ENCODE measurements at regions of chr3 and their contacts with region 1.

Region 1: DNA sequence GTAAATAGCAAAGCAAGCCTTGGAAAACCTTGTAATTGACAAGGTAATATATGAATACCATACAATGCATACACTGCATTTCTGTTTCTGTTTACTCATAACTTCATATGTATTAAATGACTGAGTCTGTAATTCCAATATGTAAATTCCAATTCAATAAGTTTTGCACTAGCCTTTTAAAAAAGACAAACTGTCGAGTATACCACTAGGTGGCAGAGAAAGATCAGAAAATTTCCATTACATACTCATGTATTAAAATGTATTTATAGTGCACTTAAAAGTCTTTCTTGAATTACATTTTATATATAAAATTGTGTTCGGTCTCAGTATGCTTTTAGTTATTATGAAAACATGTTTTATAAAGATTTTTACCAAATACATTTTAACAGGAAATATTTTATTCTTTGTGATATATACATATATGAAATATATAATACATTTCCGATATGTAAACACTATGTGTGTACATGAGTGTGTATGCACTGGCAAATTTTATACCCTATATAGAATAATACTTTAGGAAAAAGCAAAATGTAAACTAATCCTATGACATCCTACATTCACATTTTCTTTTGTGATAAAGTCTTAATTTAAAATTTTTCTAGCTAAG is 216.8 kb downstream of the VGLL3 start:
- DNase-seq: peak; percentile 45
- H3K4me3 Mint-ChIP-seq: no peak overlapping the region
- H3K27ac Mint-ChIP-seq: no peak overlapping the region
- H3K4me1 Mint-ChIP-seq: no peaks in the 10 kb centered on the region
- H3K27me3 Mint-ChIP-seq: no peaks in the 10 kb centered on the region
- CTCF ChIP-seq: peak; percentile 35

Region 2: GRCh38 chr3:86828751-86829150 is 54.6 kb after region 1 on chr3:
- CTCF ChIA-PET with region 1: no interaction called
- POLR2A ChIA-PET with region 1: no interaction called
- intact Hi-C with region 1: no loop called
- DNase-seq: peak; percentile 17
- H3K4me3 Mint-ChIP-seq: no peak overlapping the region
- H3K27ac Mint-ChIP-seq: peak overlapping the region; percentile 7
- H3K4me1 Mint-ChIP-seq: peaks cover 15% of the 10 kb centered on the region
- H3K27me3 Mint-ChIP-seq: no peaks in the 10 kb centered on the region
- CTCF ChIP-seq: no peak

Region 3: DNA sequence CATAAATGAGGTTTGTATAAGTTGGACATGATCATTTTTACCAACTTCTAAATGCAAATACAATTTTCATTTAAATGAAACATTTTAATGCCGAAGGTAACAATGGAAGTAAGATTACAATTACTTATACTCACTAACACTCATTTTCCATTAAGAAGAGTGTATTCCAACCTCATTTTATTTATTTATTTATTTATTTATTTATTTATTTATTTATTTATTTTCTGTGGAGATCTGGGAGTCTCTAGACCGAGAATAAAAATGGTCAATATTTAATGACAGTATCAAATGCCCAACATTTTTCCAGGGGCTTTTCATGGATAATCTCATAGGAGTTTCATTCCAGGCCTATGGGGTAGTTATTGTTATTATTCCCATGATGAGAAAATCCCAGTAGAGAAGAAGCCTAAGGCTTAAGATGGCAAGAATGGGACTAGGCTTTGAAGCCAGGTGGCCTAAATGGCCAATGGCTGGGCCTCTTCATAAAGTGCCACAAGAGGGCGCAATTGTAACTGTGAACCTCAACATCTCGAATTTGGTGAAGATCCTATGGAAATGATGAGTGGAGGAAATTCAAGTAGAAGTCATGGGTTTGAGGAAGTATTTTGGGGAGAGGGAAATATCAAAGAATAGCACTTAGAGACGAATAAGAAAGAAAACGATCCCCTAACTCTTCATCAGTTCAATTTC is 195.5 kb after region 1 on chr3:
- CTCF ChIA-PET with region 1: interaction called, 10 read pairs
- POLR2A ChIA-PET with region 1: no interaction called
- intact Hi-C with region 1: no loop called
- DNase-seq: peak; percentile 79
- H3K4me3 Mint-ChIP-seq: no peak overlapping the region
- H3K27ac Mint-ChIP-seq: no peak overlapping the region
- H3K4me1 Mint-ChIP-seq: peaks cover 18% of the 10 kb centered on the region
- H3K27me3 Mint-ChIP-seq: no peaks in the 10 kb centered on the region
- CTCF ChIP-seq: peak; percentile 72

Region 4: GRCh38 chr3:87167628-87168456 is 393.7 kb after region 1 on chr3:
- CTCF ChIA-PET with region 1: interaction called, 10 read pairs
- POLR2A ChIA-PET with region 1: no interaction called
- intact Hi-C with region 1: loop called (anchors 1 kb)
- DNase-seq: peak; percentile 70
- H3K4me3 Mint-ChIP-seq: peak overlapping the region; percentile 75
- H3K27ac Mint-ChIP-seq: peak overlapping the region; percentile 3
- H3K4me1 Mint-ChIP-seq: no peaks in the 10 kb centered on the region
- H3K27me3 Mint-ChIP-seq: no peaks in the 10 kb centered on the region
- CTCF ChIP-seq: peak; percentile 48

Region 5: DNA sequence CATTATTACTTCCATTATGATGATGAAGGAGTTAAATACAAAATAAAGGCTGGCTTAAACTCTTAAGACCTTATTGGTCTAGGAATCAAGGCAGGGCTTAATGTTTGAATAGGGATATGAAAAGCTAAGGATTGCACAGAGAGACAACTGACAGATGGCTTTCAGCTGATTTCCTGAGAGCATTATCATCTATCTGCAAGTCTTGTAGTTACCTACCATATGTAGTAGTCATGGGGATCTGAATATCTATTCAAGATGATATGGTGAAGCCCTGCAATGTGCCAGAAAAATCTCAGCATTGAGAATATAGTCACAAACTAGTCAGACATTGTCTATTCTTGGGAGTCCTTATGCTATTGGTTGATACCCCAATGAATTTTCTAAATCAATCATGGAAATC is 405.5 kb after region 1 on chr3:
- CTCF ChIA-PET with region 1: interaction called, 12 read pairs
- POLR2A ChIA-PET with region 1: interaction called, 3 read pairs
- intact Hi-C with region 1: no loop called
- DNase-seq: no peak
- H3K4me3 Mint-ChIP-seq: no peak overlapping the region
- H3K27ac Mint-ChIP-seq: no peak overlapping the region
- H3K4me1 Mint-ChIP-seq: no peaks in the 10 kb centered on the region
- H3K27me3 Mint-ChIP-seq: no peaks in the 10 kb centered on the region
- CTCF ChIP-seq: no peak

Region 6: GRCh38 chr3:87260270-87260669 is 486.1 kb after region 1 on chr3:
- CTCF ChIA-PET with region 1: interaction called, 5 read pairs
- POLR2A ChIA-PET with region 1: no interaction called
- intact Hi-C with region 1: loop called (anchors 1 kb)
- DNase-seq: peak; percentile 69
- H3K4me3 Mint-ChIP-seq: no peak overlapping the region
- H3K27ac Mint-ChIP-seq: no peak overlapping the region
- H3K4me1 Mint-ChIP-seq: no peaks in the 10 kb centered on the region
- H3K27me3 Mint-ChIP-seq: no peaks in the 10 kb centered on the region
- CTCF ChIP-seq: peak; percentile 53

Region 7: GRCh38 chr3:87503900-87504508 is 729.8 kb after region 1 on chr3:
- CTCF ChIA-PET with region 1: no interaction called
- POLR2A ChIA-PET with region 1: no interaction called
- intact Hi-C with region 1: loop called (anchors 10 kb)
- DNase-seq: peak; percentile 81
- H3K4me3 Mint-ChIP-seq: no peak overlapping the region
- H3K27ac Mint-ChIP-seq: no peak overlapping the region
- H3K4me1 Mint-ChIP-seq: no peaks in the 10 kb centered on the region
- H3K27me3 Mint-ChIP-seq: no peaks in the 10 kb centered on the region
- CTCF ChIP-seq: peak; percentile 70

Region 8: DNA sequence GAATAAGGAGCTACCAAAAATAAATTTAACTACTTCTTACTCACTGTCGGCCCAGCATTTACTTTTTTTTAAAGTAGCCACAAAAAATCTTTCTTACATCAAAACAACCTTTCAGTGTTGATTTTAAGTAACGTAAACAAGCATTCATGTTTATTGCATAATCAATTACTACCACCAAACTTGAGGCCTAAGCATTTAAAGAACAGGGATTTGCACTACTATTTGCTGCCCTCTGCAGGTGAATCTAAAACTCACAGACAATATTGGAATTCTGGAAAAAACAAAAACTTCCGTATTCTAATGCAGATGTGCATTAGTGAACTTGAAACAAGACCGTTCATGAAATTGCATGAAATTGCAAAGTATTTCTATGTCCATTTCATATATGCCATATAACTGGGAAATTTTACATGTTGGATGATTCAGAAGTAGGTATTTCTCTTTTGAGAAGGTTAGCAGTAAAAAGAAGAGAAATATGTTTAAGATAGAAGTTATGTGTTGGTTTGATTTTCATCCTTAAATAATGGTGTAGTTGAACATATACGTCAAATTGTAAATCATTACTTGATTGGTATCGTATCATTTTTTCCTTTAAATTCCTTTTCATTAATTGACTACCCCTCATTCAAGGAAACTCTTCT is 1229.0 kb after region 1 on chr3:
- CTCF ChIA-PET with region 1: no interaction called
- POLR2A ChIA-PET with region 1: no interaction called
- intact Hi-C with region 1: loop called (anchors 2 kb)
- DNase-seq: peak; percentile 68
- H3K4me3 Mint-ChIP-seq: no peak overlapping the region
- H3K27ac Mint-ChIP-seq: no peak overlapping the region
- H3K4me1 Mint-ChIP-seq: no peaks in the 10 kb centered on the region
- H3K27me3 Mint-ChIP-seq: no peaks in the 10 kb centered on the region
- CTCF ChIP-seq: peak; percentile 69

Measured in MCF 10A (cell line).